ENCODE measurements at regions of chr20 and their contacts with region 1.

Region 1: DNA sequence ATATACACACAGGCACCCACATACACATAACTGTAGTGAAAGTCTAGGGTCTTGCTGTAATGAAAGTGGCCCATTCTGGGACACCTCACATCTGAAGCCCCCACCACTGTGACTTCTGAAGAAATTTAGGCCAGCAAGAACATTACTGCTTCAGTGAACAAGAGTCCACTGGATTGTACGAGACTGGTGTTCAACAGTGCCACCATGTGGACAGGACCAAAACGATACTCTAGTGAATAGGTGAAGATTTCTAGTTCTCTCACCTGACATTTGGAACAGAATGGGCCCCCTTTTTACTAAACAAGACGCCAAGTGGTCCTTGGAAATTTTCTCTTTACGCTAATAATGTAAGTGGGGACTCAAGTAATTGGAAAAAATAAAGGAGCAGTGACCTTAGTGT is 156.9 kb downstream of the MAFB start:
- DNase-seq: peak; percentile 11
- H3K4me3 ChIP-seq: no peak overlapping the region
- H3K27ac ChIP-seq: no peak overlapping the region
- H3K4me1 ChIP-seq: no peaks in the 10 kb centered on the region
- H3K27me3 ChIP-seq: no peaks in the 10 kb centered on the region
- CTCF ChIP-seq: peak in 1 of 2 donors; percentile 29
- POLR2A ChIP-seq: no peak

Region 2: DNA sequence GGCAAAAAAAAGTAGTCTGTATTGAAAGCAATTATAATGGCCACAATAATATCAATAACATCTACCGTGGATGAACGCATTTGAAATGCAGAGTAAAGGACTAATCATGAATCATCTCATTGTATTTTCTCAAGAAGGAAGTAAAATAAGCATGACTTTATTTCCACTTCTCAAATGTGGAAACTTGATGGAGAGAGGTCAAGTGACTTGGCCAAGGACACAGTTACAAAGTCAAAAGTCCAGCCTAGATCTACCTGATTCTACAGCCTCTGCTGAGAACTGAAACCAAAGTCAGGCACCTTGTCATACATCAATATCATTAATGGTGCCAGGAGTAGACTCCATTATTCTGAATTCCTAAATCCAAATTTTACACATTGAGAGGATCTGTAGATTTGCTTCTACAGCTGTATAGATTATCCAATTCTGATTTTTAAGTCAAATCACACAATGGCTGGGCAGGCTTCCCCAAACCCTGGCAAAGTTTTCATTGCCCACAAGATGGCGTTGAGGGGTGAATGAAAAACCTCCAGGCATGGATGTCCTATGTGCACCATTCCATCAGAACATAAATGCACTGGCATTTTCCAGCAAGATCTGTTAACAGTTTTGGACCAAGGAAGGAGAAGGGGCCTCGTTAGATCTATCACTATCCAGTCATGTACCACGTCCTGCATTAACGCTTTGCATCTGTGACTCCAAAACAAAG is 266.1 kb before region 1 on chr20:
- CTCF ChIA-PET with region 1: no interaction called
- POLR2A ChIA-PET with region 1: no interaction called
- dilution Hi-C with region 1: no loop called
- intact Hi-C with region 1: loop called (anchors 5 kb)
- DNase-seq: peak; percentile 58
- H3K4me3 ChIP-seq: no peak overlapping the region
- H3K27ac ChIP-seq: no peak overlapping the region
- H3K4me1 ChIP-seq: peaks cover 18% of the 10 kb centered on the region
- H3K27me3 ChIP-seq: no peaks in the 10 kb centered on the region
- CTCF ChIP-seq: peak in 1 of 2 donors; percentile 40
- POLR2A ChIP-seq: no peak

Region 3: GRCh38 chr20:40663991-40664880 is 132.1 kb after region 1 on chr20:
- CTCF ChIA-PET with region 1: no interaction called
- POLR2A ChIA-PET with region 1: no interaction called
- dilution Hi-C with region 1: no loop called
- intact Hi-C with region 1: no loop called
- DNase-seq: no peak
- H3K4me3 ChIP-seq: no peak overlapping the region
- H3K27ac ChIP-seq: no peak overlapping the region
- H3K4me1 ChIP-seq: no peaks in the 10 kb centered on the region
- H3K27me3 ChIP-seq: peaks cover 0 to 3% of the 10 kb centered on the region in 2 experiments
- CTCF ChIP-seq: no peak
- POLR2A ChIP-seq: no peak

Measured in endothelial cell of umbilical vein (primary cell).